ENCODE measurements at regions of chr2 and their contacts with region 1.

Region 1: GRCh38 chr2:119659601-119660342 is 19.2 kb upstream of the TMEM177 start:
- DNase-seq: peak; percentile 68
- H3K4me3 Mint-ChIP-seq: no peak overlapping the region
- H3K27ac Mint-ChIP-seq: no peak overlapping the region
- H3K4me1 Mint-ChIP-seq: no peaks in the 10 kb centered on the region
- H3K27me3 Mint-ChIP-seq: peaks cover 28% of the 10 kb centered on the region
- CTCF ChIP-seq: peak; percentile 83

Region 2: DNA sequence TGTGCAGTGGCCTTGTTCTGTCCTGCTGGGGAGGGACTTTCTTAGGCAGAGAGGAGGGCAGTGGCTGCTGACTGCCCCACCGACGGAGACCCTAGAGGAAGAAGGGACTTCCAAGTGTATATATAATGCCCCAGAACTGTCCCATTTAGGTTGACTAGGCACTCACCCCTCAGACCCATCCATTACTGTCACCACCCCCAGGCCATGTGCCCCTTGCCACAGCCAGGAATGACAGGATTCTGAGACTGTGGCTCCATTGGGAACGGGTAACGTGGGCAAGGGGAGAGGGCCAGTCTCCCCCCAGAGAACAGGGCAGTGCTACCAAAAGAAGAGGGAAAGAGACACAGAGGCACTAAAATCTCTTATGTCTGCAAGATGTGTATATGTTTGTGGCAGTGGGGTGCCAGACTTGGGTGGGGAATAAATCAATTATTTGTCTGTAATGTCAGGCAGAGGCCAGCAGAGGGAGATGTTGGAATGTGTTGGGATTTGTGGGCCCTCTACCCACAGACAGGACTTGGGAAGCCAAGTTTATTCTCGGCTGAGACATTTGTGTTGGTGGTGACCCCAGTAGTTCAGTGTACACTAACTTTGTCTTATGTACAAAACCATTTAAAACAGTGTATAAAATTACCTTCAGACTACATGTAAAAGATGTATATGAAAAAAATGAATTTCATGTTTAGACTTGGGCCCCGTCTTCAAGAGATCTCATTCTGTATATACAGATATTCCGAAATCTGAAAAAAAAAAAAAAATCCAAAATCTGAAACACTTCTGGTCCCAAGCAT is 252.1 kb before region 1 on chr2:
- CTCF ChIA-PET with region 1: no interaction called
- intact Hi-C with region 1: loop called (anchors 1 kb)
- DNase-seq: peak; percentile 62
- H3K4me3 Mint-ChIP-seq: no peak overlapping the region
- H3K27ac Mint-ChIP-seq: no peak overlapping the region
- H3K4me1 Mint-ChIP-seq: no peaks in the 10 kb centered on the region
- H3K27me3 Mint-ChIP-seq: no peaks in the 10 kb centered on the region
- CTCF ChIP-seq: peak; percentile 77

Region 3: GRCh38 chr2:119517433-119517832 is 142.3 kb before region 1 on chr2:
- CTCF ChIA-PET with region 1: no interaction called
- intact Hi-C with region 1: loop called (anchors 1 kb)
- DNase-seq: peak; percentile 75
- H3K4me3 Mint-ChIP-seq: no peak overlapping the region
- H3K27ac Mint-ChIP-seq: no peak overlapping the region
- H3K4me1 Mint-ChIP-seq: no peaks in the 10 kb centered on the region
- H3K27me3 Mint-ChIP-seq: peaks cover 13% of the 10 kb centered on the region
- CTCF ChIP-seq: peak; percentile 80

Region 4: DNA sequence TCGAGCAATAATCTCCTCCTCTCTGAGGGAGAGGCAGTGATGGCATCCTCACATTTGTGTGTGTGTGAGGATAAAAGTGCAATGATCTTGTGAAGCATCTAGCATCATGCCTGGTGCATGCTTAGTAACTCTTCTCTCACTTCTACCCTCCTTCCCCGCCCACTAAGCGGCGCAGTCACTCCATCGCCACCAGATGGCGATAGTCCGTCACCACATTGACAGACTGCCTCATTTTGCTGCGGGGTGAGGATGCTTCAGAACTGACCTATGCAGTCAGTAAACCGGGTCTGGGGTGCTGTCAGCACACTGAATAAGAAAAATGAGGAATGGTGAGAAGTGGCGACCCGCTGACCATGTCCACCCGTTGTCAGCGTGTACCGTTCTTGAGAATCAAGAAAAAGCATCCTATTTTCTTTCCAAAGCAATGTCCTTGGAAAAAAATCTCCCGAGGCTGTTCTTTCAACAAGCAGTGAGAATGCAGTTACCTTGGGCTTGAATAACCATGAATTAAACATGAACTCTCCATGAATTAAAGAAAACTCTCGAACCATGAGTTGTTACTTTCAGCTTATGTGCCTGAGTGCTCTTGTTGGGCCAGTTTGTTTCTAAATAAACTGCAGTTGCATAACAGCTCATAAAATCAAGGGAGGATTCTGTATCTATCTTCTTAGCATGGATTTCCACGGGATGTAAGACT is 18.1 kb before region 1 on chr2:
- CTCF ChIA-PET with region 1: no interaction called
- intact Hi-C with region 1: loop called (anchors 2 kb)
- DNase-seq: peak; percentile 79
- H3K4me3 Mint-ChIP-seq: no peak overlapping the region
- H3K27ac Mint-ChIP-seq: no peak overlapping the region
- H3K4me1 Mint-ChIP-seq: peaks cover 30% of the 10 kb centered on the region
- H3K27me3 Mint-ChIP-seq: no peaks in the 10 kb centered on the region
- CTCF ChIP-seq: peak; percentile 86

Region 5: GRCh38 chr2:121297217-121297830 is 1637.6 kb after region 1 on chr2:
- CTCF ChIA-PET with region 1: no interaction called
- intact Hi-C with region 1: no loop called
- DNase-seq: peak; percentile 62
- H3K4me3 Mint-ChIP-seq: no peak overlapping the region
- H3K27ac Mint-ChIP-seq: no peak overlapping the region
- H3K4me1 Mint-ChIP-seq: peaks cover 24% of the 10 kb centered on the region
- H3K27me3 Mint-ChIP-seq: no peaks in the 10 kb centered on the region
- CTCF ChIP-seq: peak; percentile 53